ENCODE measurements at regions of chr17 and their contacts with region 1.

Region 1: DNA sequence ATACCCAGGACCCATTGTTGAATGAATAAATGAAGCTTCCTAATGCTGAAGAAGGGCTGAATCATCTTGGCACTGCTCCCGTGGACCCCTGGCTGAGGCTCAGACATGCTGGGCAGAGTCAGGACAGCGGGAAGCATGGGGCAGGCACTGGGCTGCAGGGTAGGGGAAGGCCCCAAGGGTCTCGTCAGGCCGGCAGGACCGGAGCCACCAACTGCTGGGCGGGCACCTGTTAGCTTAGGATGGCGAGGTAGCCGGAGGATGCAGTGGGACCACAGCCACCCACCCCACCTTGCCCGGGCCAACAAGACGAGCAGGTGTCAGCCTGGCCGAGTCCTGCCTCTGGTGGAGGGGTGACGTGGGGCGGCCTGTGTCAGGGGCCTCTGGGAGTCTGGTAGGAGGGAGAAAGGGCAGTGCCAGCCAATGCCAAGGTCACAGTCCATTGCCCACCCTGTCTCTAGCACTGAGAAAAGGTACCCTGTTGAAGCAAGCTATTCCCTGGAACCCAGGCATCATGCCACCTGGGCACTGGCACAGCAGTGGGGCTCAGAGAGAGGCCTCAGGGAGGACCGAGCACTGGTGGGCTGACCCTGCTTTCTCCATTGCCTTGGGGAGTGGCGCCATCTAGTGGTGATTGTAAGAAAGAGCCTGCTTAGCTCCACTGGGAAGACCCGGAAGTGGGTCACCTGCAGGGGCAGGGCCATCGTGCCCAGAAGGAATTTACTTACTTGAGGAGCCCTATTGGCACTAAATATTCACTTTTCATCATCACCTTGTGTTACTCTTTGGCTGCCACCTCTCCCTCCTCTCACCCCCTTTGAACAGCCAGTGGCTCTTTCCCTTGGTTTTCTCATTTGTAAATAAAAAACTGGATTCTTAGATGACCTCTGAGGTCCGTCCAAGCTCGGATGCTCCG is 3.0 kb upstream of the DLX3 start:
- DNase-seq: peak; percentile 20 to 83
- H3K4me3 ChIP-seq: no peak overlapping the region
- H3K27ac ChIP-seq: no peak overlapping the region
- H3K4me1 ChIP-seq: peaks cover 11 to 16% of the 10 kb centered on the region in 2 donors
- H3K27me3 ChIP-seq: peaks cover 30% of the 10 kb centered on the region
- CTCF ChIP-seq: peak; percentile 91 to 96 (median 92)

Region 2: GRCh38 chr17:49730078-49730784 is 267.8 kb before region 1 on chr17:
- intact Hi-C with region 1: no loop called
- DNase-seq: peak; percentile 16 to 87
- H3K4me3 ChIP-seq: no peak overlapping the region
- H3K27ac ChIP-seq: peak overlapping the region; percentile 73 to 81
- H3K4me1 ChIP-seq: peaks cover 15 to 29% of the 10 kb centered on the region in 2 donors
- H3K27me3 ChIP-seq: no peaks in the 10 kb centered on the region
- CTCF ChIP-seq: no peak

Region 3: GRCh38 chr17:49861150-49861892 is 136.7 kb before region 1 on chr17:
- intact Hi-C with region 1: loop called (anchors 1 kb)
- DNase-seq: no peak
- H3K4me3 ChIP-seq: no peak overlapping the region
- H3K27ac ChIP-seq: no peak overlapping the region
- H3K4me1 ChIP-seq: peaks cover 0 to 2% of the 10 kb centered on the region in 2 donors
- H3K27me3 ChIP-seq: no peaks in the 10 kb centered on the region
- CTCF ChIP-seq: peak; percentile 68 to 88 (median 75)

Region 4: DNA sequence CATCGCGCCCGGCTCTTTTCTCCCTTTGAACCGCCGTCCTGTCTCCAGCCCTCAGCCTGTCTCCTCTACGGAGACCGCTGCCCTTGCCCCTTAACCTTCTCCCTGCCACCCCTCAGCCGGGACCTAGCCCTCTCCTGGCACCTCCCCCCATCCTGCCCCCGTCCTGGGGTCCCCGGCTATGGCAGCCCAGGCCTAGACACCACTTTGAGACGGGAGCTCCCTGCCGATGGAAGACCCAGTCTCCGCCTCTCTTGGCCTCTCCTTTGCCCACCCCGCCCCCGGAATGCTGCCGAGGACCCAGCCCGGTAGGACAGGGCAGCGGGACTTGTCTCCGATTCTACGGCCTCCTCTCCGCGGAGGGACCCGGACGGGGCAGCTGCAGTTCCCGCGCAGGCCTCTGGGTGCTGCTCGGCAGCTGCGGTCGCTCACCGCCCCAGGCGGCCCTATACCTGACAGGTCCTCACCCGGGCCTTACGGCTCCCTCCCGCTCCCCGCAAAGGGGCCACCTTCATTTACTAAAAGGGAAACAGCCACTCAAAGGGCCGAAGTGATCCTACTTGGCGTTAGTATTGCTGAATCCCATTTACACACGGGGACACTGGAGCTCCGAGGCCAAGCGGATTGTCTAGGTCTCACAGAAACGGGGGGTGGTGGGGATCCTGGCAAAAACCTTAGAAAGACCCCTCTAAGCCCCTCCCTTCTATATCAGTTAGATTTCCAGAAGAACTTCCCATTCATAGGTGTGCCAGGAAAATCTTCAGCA is 117.6 kb before region 1 on chr17:
- intact Hi-C with region 1: loop called (anchors 1 kb)
- DNase-seq: peak in 1 of 2 donors; percentile 71
- H3K4me3 ChIP-seq: no peak overlapping the region
- H3K27ac ChIP-seq: no peak overlapping the region
- H3K4me1 ChIP-seq: peaks cover 0 to 2% of the 10 kb centered on the region in 2 donors
- H3K27me3 ChIP-seq: peaks cover 6% of the 10 kb centered on the region
- CTCF ChIP-seq: peak; percentile 90 to 100 (median 99)

Region 5: DNA sequence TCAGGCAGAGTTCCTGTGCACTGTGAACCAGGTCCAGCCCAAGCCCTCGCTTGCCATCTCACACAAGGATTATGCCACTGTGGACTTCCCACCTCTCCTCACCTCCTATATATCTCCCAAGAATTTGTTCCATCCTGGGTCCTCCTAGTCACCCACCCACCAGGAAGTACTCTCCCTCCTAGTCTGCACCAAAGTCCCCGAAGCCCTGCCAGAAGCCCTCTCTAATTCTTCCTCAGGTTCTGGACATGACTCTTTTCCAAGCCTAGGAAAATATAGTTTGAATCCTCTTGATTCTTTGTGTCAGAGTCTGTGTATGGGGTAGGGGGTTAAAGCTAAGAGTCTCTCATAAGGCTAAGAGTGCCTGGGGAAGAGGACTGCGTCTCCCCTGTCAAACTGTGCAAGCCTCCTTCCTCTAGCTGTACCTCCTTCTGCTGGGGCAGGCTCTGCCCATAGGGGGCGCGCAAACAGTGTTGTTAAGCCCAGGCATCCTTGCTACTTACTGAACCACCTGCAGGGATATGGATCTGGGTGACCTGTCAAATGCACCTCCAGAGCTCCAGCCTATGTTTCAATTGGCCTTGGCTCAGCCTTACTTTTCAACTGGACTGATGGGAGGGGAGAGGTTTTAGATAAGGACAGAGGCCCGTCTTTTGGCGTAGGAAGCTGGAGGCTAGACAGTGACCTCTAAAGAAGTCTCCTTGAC is 45.7 kb before region 1 on chr17:
- intact Hi-C with region 1: loop called (anchors 1 kb)
- DNase-seq: peak; percentile 23 to 84
- H3K4me3 ChIP-seq: no peak overlapping the region
- H3K27ac ChIP-seq: no peak overlapping the region
- H3K4me1 ChIP-seq: no peaks in the 10 kb centered on the region
- H3K27me3 ChIP-seq: no peaks in the 10 kb centered on the region
- CTCF ChIP-seq: peak; percentile 68 to 82 (median 71)

Region 6: DNA sequence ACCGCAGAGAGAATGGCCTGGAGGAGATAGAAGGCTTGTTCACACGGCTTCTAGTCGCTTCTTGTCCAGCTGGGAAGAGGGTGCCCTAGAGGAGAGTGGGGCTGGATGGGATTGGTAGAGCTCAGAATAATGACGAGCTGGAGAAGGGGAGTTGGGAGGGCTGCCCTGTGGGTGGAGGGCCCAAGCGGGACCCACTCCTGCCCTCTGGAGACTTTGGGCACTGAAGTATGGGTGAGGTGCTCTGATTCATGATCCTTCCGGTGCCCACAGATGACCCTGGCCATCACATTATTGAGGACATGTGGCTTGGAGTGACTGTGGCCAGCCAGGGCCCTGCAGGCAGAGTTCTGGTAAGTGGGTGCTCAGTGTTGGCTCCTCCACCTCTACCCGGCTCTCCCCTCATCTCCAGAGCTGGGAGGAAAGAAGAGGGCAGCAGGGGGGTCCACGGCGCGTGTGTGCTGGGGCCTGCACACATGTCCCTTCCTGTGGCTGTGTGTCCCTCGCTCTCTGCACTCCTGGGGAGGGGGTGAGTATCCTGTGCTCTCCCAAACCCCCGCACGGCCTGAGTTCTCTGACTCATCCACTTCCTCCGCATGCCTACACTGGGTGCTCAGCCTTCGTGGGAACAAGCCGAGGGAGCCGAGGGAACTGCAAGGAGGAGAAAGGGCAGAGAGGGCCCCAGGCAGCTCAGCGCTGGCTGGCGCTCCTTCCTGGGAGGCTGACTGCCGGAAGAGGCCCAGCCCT is 66.4 kb after region 1 on chr17:
- intact Hi-C with region 1: no loop called
- DNase-seq: peak; percentile 72 to 94
- H3K4me3 ChIP-seq: no peak overlapping the region
- H3K27ac ChIP-seq: peak overlapping the region; percentile 95 to 97
- H3K4me1 ChIP-seq: peaks cover 42 to 69% of the 10 kb centered on the region in 2 donors
- H3K27me3 ChIP-seq: no peaks in the 10 kb centered on the region
- CTCF ChIP-seq: peak in 1 of 3 experiments; percentile 9

Region 7: DNA sequence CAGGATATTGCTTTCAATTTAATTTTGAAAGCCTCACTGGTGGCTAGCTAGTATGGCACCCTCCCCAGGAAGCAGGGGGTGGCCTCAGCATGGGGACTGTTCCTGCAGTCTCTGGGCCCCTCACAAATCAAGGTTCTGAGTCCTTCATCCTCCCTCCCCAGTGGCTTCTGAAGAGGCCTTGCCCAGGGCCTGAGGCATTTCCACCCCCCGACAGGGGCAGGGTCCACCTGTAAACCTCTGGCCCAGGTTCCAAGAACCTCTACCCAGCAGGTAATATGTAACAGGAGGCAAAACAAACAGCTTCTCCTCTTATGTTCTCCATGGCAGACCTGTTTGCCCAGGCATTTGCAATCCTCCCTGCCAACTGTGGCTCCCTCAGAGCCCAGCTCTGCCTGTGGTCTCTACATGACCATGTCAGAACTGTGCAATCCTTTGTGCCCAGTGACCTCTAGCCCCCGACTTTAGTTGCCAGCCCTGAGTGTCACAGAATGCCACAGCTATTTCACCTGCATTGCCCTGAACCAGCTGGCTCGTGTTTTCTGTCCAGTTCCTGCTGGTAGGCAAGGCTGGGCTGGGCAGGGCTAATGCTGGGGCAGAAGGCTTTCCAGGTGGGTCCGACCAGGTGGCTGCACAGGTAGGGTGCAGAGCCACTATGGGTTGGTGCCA is 442.3 kb after region 1 on chr17:
- intact Hi-C with region 1: no loop called
- DNase-seq: no peak
- H3K4me3 ChIP-seq: no peak overlapping the region
- H3K27ac ChIP-seq: no peak overlapping the region
- H3K4me1 ChIP-seq: no peaks in the 10 kb centered on the region
- H3K27me3 ChIP-seq: no peaks in the 10 kb centered on the region
- CTCF ChIP-seq: no peak